ENCODE measurements at regions of chr11 and their contacts with region 1.

Region 1: DNA sequence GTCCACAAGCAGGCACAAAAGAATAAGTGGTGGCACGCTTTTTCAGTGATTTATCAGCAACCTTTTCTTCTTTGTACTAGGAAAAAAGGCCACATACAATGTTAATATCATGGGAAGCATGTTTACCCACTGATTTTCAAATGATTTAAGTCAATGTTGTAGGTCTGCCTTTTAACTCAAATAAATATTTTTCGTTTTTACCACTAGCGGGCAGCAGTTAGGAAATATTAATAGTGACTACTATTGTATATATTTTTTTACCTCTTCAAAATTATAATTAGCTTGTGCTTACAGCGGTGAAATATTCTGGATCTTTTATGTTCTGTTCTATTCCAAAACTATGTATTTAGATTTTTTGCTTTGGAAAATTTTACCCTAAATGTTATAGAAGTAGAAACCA is 6.4 kb upstream of the SLC17A6 start:
- DNase-seq: no peak
- ATAC-seq: no peak
- H3K4me3 ChIP-seq: no peak overlapping the region
- H3K27ac ChIP-seq: no peak overlapping the region
- H3K4me1 ChIP-seq: no peaks in the 10 kb centered on the region
- H3K27me3 ChIP-seq: no peaks in the 10 kb centered on the region; the same call in 1 of the 2 replicates
- CTCF ChIP-seq: no peak; a peak in 1 of 6 replicates
- POLR2A ChIP-seq: no peak
- RAD21 ChIP-seq: no peak

Region 2: GRCh38 chr11:22539821-22540256 is 208.1 kb after region 1 on chr11:
- CTCF ChIA-PET with region 1: interaction called, 4 read pairs
- POLR2A ChIA-PET with region 1: no interaction called
- RAD21 ChIA-PET with region 1: no interaction called
- intact Hi-C with region 1: loop called (anchors 1 kb)
- DNase-seq: no peak
- ATAC-seq: no peak; the same call in 1 of the 2 replicates
- H3K4me3 ChIP-seq: no peak overlapping the region
- H3K27ac ChIP-seq: no peak overlapping the region
- H3K4me1 ChIP-seq: no peaks in the 10 kb centered on the region
- H3K27me3 ChIP-seq: no peaks in the 10 kb centered on the region
- CTCF ChIP-seq: peak in 2 of 3 experiments; percentile 15 to 41; a peak in 2 of 6 replicates
- POLR2A ChIP-seq: no peak
- RAD21 ChIP-seq: peak; percentile 52

Measured in HCT116 (cell line).